CD4-positive, alpha-beta T cell (primary cell): ENCODE measurements at regions of chr10 and their contacts with region 1.

Region 1: DNA sequence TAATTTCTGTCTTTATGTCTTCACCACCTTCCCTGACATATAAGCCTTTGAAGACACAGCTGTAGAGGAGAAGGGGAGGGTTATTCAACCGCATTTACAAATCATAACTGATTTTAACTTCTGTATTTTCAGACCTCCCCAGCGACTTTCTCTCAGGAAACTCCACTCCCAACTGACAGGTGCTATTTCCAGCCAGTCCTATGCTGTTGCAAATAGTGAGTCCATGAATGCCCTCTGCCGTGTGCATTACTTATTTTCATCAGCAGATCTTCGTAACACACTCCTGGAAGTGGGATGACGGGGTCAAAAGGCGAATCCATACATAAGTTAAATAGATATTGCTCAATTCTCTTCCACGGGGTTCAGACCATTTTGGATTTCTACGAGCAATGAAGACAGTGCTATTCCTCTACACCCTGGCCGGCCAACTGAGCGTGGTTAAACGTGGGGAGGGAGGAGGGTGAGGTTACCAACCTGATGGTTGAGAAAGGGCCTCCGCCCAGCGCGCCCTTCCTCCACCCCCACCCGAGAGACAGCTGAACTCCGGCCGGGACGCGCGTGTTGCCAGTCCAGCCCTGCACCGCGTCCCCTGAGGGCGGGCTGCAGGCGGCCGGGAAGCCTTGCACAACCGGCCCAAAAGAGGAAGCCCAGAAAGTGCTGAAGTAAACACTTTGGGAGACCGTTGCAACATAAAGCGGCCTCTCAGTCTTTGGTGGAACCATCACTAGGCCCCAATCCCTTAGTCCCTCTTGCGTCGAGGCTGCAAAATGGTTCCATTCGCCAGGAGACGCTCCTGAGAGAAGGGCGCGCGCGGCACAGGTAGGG is at the start of gene APBB1IP:
- DNase-seq: peak; percentile 19 to 81 (median 37)
- ATAC-seq: peak; percentile 47
- H3K4me3 ChIP-seq: peak within 1 kb of the TSS; percentile 91
- H3K4me3 Mint-ChIP-seq: peak within 1 kb of the TSS; percentile 98
- H3K27ac ChIP-seq: peak within 1 kb of the TSS; percentile 69 to 91
- H3K27ac Mint-ChIP-seq: peak within 1 kb of the TSS; percentile 97
- H3K4me1 ChIP-seq: peaks cover 38% of the 10 kb centered on the region
- H3K4me1 Mint-ChIP-seq: peaks cover 61% of the 10 kb centered on the region
- H3K27me3 ChIP-seq: no peaks in the 10 kb centered on the region
- H3K27me3 Mint-ChIP-seq: no peaks in the 10 kb centered on the region
- CTCF ChIP-seq: no peak
- total RNA-seq, gene APBB1IP: 44.5 to 45.6 TPM

Region 2: GRCh38 chr10:26157734-26158133 is 280.1 kb before region 1 on chr10:
- CTCF ChIA-PET with region 1: no interaction called
- POLR2A ChIA-PET with region 1: no interaction called
- intact Hi-C with region 1: no loop called
- DNase-seq: no peak
- ATAC-seq: no peak
- H3K4me3 ChIP-seq: no peak overlapping the region
- H3K4me3 Mint-ChIP-seq: no peak overlapping the region
- H3K27ac ChIP-seq: no peak overlapping the region
- H3K27ac Mint-ChIP-seq: no peak overlapping the region
- H3K4me1 ChIP-seq: no peaks in the 10 kb centered on the region
- H3K4me1 Mint-ChIP-seq: no peaks in the 10 kb centered on the region
- H3K27me3 ChIP-seq: peaks cover 0 to 7% of the 10 kb centered on the region in 2 experiments
- H3K27me3 Mint-ChIP-seq: peaks cover 33% of the 10 kb centered on the region
- CTCF ChIP-seq: no peak

Region 3: DNA sequence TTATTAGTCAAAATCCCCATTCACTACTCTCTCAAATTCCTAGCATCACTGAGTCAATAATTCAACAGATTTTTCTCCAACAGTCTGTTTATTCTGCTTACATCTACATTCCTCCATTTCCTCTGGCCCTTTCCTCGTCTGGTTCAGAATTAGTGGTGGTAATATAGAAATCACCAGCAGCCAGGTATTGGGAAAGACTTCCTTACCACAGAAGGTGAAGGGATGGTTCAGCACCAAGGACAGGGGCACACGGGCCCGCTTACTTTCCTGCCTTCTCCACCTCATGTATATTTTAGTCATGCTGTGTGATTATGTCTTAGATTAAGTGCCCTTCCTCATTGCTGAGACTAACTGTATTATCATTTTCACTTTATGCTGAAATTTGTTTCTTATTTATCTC is 70.1 kb before region 1 on chr10:
- CTCF ChIA-PET with region 1: no interaction called
- POLR2A ChIA-PET with region 1: no interaction called
- intact Hi-C with region 1: loop called in 1 of 2 experiments (anchors 10 kb)
- DNase-seq: peak in 10 of 14 experiments; percentile 7 to 55 (median 22)
- ATAC-seq: no peak
- H3K4me3 ChIP-seq: no peak overlapping the region
- H3K4me3 Mint-ChIP-seq: no peak overlapping the region
- H3K27ac ChIP-seq: no peak overlapping the region
- H3K27ac Mint-ChIP-seq: no peak overlapping the region
- H3K4me1 ChIP-seq: no peaks in the 10 kb centered on the region
- H3K4me1 Mint-ChIP-seq: no peaks in the 10 kb centered on the region
- H3K27me3 ChIP-seq: no peaks in the 10 kb centered on the region
- H3K27me3 Mint-ChIP-seq: no peaks in the 10 kb centered on the region
- CTCF ChIP-seq: no peak

Region 4: DNA sequence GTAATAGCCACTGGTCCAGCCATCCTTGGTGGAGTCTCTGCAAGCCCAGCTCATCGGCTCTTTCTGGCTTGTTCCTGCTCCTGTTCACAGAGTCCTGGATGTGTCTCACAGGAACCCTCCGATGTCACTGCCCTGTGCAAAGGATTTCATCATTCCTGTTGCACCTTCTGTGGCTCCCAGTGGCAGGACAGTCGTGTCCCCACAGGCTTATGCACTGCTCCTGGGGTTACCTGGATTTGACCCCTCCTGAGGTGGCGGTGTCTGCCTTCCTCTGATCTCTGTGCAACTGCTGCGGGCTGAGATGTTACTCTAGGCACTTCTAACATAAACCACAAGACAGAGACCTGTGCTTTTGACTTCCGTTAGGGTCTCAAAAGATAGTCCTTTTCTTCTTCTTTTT is 30.9 kb after region 1 on chr10:
- CTCF ChIA-PET with region 1: interaction called, 4 read pairs
- POLR2A ChIA-PET with region 1: interaction called, 13 read pairs
- intact Hi-C with region 1: loop called (anchors 2 to 5 kb)
- DNase-seq: peak; percentile 33 to 83 (median 54)
- ATAC-seq: peak; percentile 86
- H3K4me3 ChIP-seq: peak overlapping the region; percentile 10
- H3K4me3 Mint-ChIP-seq: peak overlapping the region; percentile 84
- H3K27ac ChIP-seq: peak overlapping the region; percentile 13 to 38
- H3K27ac Mint-ChIP-seq: peak overlapping the region; percentile 90
- H3K4me1 ChIP-seq: peaks cover 82% of the 10 kb centered on the region
- H3K4me1 Mint-ChIP-seq: peaks cover 96% of the 10 kb centered on the region
- H3K27me3 ChIP-seq: no peaks in the 10 kb centered on the region
- H3K27me3 Mint-ChIP-seq: no peaks in the 10 kb centered on the region
- CTCF ChIP-seq: no peak

Region 5: DNA sequence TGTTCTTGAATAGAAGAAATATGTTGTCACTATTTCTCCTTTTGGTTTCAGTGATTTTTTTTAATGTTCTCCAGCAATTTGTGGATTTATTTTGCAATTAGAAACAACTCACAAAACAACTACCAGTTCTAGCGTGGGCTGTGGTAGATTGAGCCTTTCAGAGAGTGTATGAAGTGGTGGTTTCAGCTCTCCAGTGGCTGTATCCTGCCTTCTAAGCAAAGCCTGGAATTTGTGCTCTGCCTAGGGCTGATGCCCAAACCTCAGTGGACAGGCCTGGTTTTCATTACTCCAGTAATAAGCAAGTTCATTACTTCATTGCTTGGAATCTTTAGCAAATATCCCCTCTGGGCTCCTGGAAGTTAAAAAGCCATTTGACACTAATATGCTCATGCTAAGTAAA is 36.2 kb after region 1 on chr10:
- CTCF ChIA-PET with region 1: interaction called, 4 read pairs
- POLR2A ChIA-PET with region 1: interaction called, 13 read pairs
- intact Hi-C with region 1: loop called (anchors 2 to 5 kb)
- DNase-seq: peak in 1 of 14 experiments; percentile 30
- ATAC-seq: no peak
- H3K4me3 ChIP-seq: no peak overlapping the region
- H3K4me3 Mint-ChIP-seq: peak overlapping the region; percentile 65
- H3K27ac ChIP-seq: peak overlapping the region; percentile 72 to 90
- H3K27ac Mint-ChIP-seq: peak overlapping the region; percentile 97
- H3K4me1 ChIP-seq: peaks cover 88% of the 10 kb centered on the region
- H3K4me1 Mint-ChIP-seq: peaks cover 84% of the 10 kb centered on the region
- H3K27me3 ChIP-seq: no peaks in the 10 kb centered on the region
- H3K27me3 Mint-ChIP-seq: no peaks in the 10 kb centered on the region
- CTCF ChIP-seq: no peak

Region 6: GRCh38 chr10:26481914-26482550 is 44.2 kb after region 1 on chr10:
- CTCF ChIA-PET with region 1: interaction called, 3 read pairs
- POLR2A ChIA-PET with region 1: interaction called, 28 read pairs
- intact Hi-C with region 1: loop called (anchors 1 to 5 kb)
- DNase-seq: peak in 11 of 14 experiments; percentile 21 to 89 (median 47)
- ATAC-seq: peak; percentile 73
- H3K4me3 ChIP-seq: peak overlapping the region; percentile 27
- H3K4me3 Mint-ChIP-seq: peak overlapping the region; percentile 47
- H3K27ac ChIP-seq: peak overlapping the region; percentile 66 to 71
- H3K27ac Mint-ChIP-seq: peak overlapping the region; percentile 88
- H3K4me1 ChIP-seq: peaks cover 78% of the 10 kb centered on the region
- H3K4me1 Mint-ChIP-seq: peaks cover 79% of the 10 kb centered on the region
- H3K27me3 ChIP-seq: no peaks in the 10 kb centered on the region
- H3K27me3 Mint-ChIP-seq: no peaks in the 10 kb centered on the region
- CTCF ChIP-seq: no peak

Region 7: DNA sequence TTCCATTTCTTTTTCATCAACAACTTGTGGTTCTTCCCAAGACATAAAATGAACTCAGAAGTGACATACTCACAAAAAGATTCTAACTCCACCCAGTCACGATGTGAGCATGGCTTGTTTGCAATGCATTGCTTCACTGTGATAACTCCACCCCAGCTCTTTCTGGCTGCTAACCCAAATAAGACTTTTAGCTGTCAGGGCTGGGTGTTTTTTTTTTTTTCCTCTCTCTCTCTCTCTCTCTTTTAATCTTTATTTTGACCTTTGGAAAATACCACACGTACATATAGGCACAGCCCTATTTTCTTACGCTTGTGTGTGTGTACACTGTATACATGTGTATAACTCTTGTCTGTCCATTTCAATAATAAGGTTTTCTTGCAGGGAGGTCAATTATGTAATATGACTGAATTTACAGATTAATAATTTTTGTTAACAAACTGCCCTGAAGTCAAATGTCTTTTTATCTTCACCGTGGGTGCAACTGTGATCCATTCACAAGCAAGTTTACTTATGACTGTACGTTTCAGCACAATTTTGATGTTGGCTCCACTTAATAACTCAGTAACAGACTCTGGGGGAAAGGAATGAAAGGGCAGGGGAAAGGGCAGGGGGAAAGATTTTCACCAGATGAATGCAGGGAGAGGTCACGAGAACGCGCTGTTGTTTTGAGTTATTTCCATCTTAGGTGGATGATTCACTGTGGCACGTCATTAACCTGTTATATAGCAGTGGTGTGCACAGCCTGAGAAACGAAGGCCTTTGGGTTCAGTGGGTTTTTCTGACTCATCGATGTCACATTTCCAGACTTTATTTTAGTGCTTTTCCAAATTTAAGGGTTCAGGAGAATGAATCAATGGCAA is 49.4 kb after region 1 on chr10:
- CTCF ChIA-PET with region 1: no interaction called
- POLR2A ChIA-PET with region 1: interaction called, 28 read pairs
- intact Hi-C with region 1: loop called (anchors 1 to 5 kb)
- DNase-seq: peak; percentile 37 to 89 (median 52)
- ATAC-seq: peak; percentile 77
- H3K4me3 ChIP-seq: peak overlapping the region; percentile 18
- H3K4me3 Mint-ChIP-seq: peak overlapping the region; percentile 62
- H3K27ac ChIP-seq: peak overlapping the region; percentile 82 to 87
- H3K27ac Mint-ChIP-seq: peak overlapping the region; percentile 94
- H3K4me1 ChIP-seq: peaks cover 58% of the 10 kb centered on the region
- H3K4me1 Mint-ChIP-seq: peaks cover 70% of the 10 kb centered on the region
- H3K27me3 ChIP-seq: no peaks in the 10 kb centered on the region
- H3K27me3 Mint-ChIP-seq: no peaks in the 10 kb centered on the region
- CTCF ChIP-seq: no peak

Region 8: GRCh38 chr10:26550774-26551526 is 113.1 kb after region 1 on chr10:
- CTCF ChIA-PET with region 1: no interaction called
- POLR2A ChIA-PET with region 1: no interaction called
- intact Hi-C with region 1: no loop called
- DNase-seq: no peak
- ATAC-seq: no peak
- H3K4me3 ChIP-seq: no peak overlapping the region
- H3K4me3 Mint-ChIP-seq: no peak overlapping the region
- H3K27ac ChIP-seq: no peak overlapping the region
- H3K27ac Mint-ChIP-seq: peak overlapping the region; percentile 34
- H3K4me1 ChIP-seq: no peaks in the 10 kb centered on the region
- H3K4me1 Mint-ChIP-seq: peaks cover 17% of the 10 kb centered on the region
- H3K27me3 ChIP-seq: no peaks in the 10 kb centered on the region
- H3K27me3 Mint-ChIP-seq: no peaks in the 10 kb centered on the region
- CTCF ChIP-seq: no peak